Activated CD8-positive, alpha-beta T cell treated with anti-CD3 and anti-CD28 coated beads for 36 hours (primary cell): ENCODE measurements at regions of chr19 and their contacts with region 1.

Region 1: DNA sequence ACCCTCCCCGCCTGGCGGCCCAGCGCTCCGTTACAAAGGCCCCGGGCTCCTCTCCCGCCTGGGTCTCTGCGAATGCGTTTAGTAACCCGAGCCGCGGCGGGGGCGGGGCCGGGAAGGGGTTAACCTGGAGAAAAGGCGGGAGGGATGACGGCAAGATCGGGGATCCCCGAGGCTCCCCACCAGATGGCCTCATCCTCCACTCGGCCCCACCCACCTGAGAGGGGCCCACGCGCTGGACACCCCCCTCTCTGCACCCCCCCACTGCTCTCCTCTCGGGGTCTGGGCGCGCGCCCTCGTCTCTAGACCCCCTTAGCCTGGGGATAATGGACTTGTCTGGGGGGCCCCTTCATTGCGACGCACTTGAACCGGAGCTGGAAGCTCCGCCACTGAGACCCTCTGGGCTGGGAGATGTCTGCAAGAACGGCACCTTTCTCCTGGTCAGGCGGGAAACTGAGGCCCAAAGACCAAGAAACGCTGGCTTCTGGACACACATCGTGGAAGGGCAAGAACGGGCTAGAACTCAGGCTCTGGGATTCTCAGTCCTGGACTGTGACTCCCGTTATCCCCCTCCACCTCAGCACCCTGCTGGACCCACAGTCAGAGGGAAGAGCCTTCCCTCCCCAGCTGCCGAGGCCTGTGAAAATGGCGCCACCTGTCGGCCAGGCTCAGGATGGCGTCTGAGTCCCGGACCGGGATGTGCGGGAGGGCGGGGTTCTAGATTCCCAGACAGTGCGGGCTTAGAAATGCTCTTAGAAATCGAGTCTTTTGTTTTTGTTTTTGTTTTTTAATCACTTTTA is 2.9 kb upstream of the LTBP4 start:
- DNase-seq: peak; percentile 88
- ATAC-seq: peak; percentile 60
- H3K4me3 Mint-ChIP-seq: peak overlapping the region; percentile 38
- H3K27ac Mint-ChIP-seq: no peak overlapping the region
- H3K4me1 Mint-ChIP-seq: peaks cover 54% of the 10 kb centered on the region
- H3K27me3 Mint-ChIP-seq: peaks cover 43% of the 10 kb centered on the region
- CTCF ChIP-seq: peak; percentile 99

Region 2: DNA sequence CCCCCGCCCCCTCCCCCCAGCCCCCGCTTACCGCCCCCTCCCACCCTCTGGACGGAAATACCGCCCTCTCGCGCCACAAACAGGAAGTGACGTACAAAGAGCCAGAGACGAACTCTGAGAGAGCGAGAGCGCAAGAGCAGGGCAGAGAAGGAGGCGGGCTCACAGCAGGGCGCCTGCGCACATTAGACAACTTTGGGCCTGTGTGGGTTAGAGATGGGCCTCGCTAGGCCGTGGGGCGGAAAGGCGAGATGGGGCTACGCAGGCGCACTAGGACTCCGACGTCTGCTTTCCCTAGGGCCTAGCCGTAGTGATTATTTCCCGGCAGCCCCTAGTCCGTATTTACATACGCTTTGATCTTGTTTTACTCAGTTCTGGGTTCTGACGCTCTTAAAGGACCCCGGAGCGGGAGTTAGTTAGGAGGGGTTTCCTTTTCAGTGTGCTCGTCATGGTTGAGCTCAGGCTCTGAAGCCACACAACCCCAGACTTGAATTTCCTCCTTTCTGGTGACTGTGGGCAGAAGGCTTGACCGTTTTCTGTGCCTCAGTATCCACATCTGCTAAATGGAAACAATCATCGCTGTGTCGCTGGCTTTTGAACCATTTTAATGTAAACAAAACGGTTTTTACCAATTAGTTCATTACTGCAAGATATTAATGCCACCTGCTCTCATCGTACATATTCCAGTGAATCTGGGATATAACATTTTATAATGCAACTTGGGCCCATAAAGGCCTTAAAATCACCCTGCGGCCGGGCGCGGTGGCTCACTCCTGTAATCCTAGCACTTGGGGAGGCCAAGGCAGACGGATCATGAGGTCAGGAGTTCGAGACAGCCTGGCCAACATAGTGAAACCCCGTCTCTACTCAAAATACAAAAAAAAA is 312.7 kb before region 1 on chr19:
- CTCF ChIA-PET with region 1: no interaction called
- POLR2A ChIA-PET with region 1: interaction called, 4 read pairs
- intact Hi-C with region 1: loop called (anchors 10 kb)
- DNase-seq: peak; percentile 99
- ATAC-seq: peak; percentile 84
- H3K4me3 Mint-ChIP-seq: peak overlapping the region; percentile 98
- H3K27ac Mint-ChIP-seq: peak overlapping the region; percentile 99
- H3K4me1 Mint-ChIP-seq: peaks cover 43% of the 10 kb centered on the region
- H3K27me3 Mint-ChIP-seq: no peaks in the 10 kb centered on the region
- CTCF ChIP-seq: no peak

Region 3: GRCh38 chr19:40305403-40305802 is 292.9 kb before region 1 on chr19:
- CTCF ChIA-PET with region 1: interaction called, 10 read pairs
- POLR2A ChIA-PET with region 1: no interaction called
- intact Hi-C with region 1: no loop called
- DNase-seq: peak; percentile 82
- ATAC-seq: peak; percentile 68
- H3K4me3 Mint-ChIP-seq: no peak overlapping the region
- H3K27ac Mint-ChIP-seq: no peak overlapping the region
- H3K4me1 Mint-ChIP-seq: peaks cover 2% of the 10 kb centered on the region
- H3K27me3 Mint-ChIP-seq: no peaks in the 10 kb centered on the region
- CTCF ChIP-seq: peak; percentile 82

Region 4: GRCh38 chr19:40489882-40490230 is 108.5 kb before region 1 on chr19:
- CTCF ChIA-PET with region 1: no interaction called
- POLR2A ChIA-PET with region 1: no interaction called
- intact Hi-C with region 1: no loop called
- DNase-seq: no peak
- ATAC-seq: no peak
- H3K4me3 Mint-ChIP-seq: no peak overlapping the region
- H3K27ac Mint-ChIP-seq: no peak overlapping the region
- H3K4me1 Mint-ChIP-seq: peaks cover 6% of the 10 kb centered on the region
- H3K27me3 Mint-ChIP-seq: peaks cover 17% of the 10 kb centered on the region
- CTCF ChIP-seq: no peak

Region 5: GRCh38 chr19:40523322-40524047 is 74.8 kb before region 1 on chr19:
- CTCF ChIA-PET with region 1: interaction called, 10 read pairs
- POLR2A ChIA-PET with region 1: no interaction called
- intact Hi-C with region 1: loop called (anchors 5 kb)
- DNase-seq: peak; percentile 67
- ATAC-seq: peak; percentile 87
- H3K4me3 Mint-ChIP-seq: no peak overlapping the region
- H3K27ac Mint-ChIP-seq: no peak overlapping the region
- H3K4me1 Mint-ChIP-seq: no peaks in the 10 kb centered on the region
- H3K27me3 Mint-ChIP-seq: peaks cover 16% of the 10 kb centered on the region
- CTCF ChIP-seq: peak; percentile 74

Region 6: DNA sequence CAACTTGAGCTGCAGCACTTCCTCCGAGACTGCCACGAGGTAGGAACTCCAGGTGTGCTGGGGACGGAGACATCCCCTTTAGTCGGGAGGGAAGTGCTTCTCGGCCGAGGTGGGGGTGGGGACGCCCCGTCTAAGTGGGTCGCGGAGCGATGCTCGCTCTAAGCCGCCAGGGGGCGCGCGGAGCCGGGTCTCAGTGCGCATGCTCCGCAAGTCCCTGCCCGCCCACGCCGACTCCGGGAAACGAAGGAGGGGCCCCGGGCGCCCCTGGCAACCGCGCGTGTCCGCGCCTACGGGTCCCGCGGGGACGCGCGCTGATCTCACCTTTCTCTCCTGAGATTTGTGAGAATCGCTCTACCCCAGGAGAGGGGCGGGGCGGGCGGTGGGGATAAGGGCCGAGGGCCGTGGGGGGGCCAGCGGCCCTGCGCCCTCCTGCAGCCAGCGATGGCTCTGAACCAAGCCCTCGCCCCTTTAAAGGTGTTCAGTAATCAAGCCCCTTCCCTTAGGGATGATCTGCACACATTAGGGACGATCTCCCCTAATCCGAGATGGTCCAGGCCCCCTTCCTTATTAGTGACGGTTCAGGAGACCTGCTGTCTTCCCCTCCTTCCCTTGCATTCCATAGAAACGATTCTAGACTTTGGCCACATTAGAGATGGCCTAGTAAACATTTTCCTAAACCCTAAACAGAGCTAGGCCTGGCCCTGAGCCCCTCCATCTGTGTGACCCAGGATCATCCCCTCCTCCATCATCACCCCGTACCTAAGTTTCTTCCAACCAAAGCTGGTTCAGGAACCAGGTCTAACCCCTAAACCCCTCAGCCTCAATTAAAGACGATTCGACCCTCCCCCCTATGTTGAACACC is 69.0 kb before region 1 on chr19:
- CTCF ChIA-PET with region 1: interaction called, 10 read pairs
- POLR2A ChIA-PET with region 1: interaction called, 8 read pairs
- intact Hi-C with region 1: loop called (anchors 5 kb)
- DNase-seq: peak; percentile 91
- ATAC-seq: peak; percentile 90
- H3K4me3 Mint-ChIP-seq: peak overlapping the region; percentile 38
- H3K27ac Mint-ChIP-seq: no peak overlapping the region
- H3K4me1 Mint-ChIP-seq: peaks cover 12% of the 10 kb centered on the region
- H3K27me3 Mint-ChIP-seq: peaks cover 20% of the 10 kb centered on the region
- CTCF ChIP-seq: peak; percentile 99

Region 7: DNA sequence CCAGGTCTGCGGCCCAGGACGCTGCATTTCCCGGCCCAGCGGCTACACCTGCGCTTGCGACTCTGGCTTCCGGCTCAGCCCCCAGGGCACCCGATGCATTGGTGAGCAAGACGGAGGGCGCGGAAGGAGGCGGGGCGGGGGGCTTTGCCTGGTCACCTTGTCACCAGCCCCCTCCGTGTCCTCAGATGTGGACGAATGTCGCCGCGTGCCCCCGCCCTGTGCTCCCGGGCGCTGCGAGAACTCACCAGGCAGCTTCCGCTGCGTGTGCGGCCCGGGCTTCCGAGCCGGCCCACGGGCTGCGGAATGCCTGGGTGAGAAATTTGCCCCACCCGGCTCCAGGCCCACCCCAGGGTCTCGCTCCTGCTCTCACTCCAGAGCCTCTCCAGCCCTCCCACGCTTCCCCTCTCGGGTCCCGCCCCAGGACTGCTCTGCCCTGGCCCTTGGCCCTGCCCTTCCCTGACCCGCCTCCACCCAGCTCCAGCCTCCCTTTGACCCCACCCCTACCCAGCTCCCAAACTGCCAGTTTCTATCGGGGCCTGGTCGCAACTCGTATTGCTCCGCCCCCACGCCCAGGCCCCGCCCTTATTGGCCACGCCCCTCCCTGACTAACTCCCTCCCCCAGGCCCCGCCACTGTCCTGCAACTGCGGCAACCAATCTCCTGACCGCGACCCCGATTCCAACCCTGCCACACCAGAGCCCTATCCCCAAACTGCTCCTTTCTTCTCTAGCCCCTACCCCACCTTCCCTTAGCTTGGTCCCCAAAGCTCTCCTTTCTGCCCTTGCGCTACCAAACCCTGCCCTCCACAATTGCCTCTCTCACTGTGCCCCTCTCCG is 11.5 kb after region 1 on chr19:
- CTCF ChIA-PET with region 1: interaction called, 17 read pairs
- POLR2A ChIA-PET with region 1: interaction called, 31 read pairs
- intact Hi-C with region 1: no loop called
- DNase-seq: peak; percentile 96
- ATAC-seq: peak; percentile 58
- H3K4me3 Mint-ChIP-seq: peak overlapping the region; percentile 80
- H3K27ac Mint-ChIP-seq: peak overlapping the region; percentile 98
- H3K4me1 Mint-ChIP-seq: peaks cover 55% of the 10 kb centered on the region
- H3K27me3 Mint-ChIP-seq: no peaks in the 10 kb centered on the region
- CTCF ChIP-seq: no peak

Region 8: DNA sequence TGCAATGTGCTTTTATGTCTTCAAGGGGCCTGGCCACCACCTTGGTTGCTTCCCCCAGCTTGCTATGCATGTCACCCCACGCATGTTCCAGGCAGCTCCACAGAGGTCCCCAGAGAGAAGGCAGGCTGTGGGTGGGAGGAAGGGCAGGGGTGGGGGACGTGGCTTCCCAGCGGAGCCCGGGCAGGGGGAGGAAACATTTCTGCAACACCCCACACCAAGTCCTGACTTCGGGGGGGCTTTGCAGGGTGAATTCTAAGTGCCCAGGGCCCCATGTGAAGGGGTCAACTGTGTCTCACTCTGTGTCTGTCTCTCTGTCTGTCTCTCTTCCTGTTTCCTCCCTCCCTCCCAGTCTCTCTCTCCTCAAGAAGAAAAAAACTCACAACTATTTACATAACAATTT is 42.4 kb after region 1 on chr19:
- CTCF ChIA-PET with region 1: interaction called, 34 read pairs
- POLR2A ChIA-PET with region 1: no interaction called
- intact Hi-C with region 1: no loop called
- DNase-seq: no peak
- ATAC-seq: no peak
- H3K4me3 Mint-ChIP-seq: no peak overlapping the region
- H3K27ac Mint-ChIP-seq: no peak overlapping the region
- H3K4me1 Mint-ChIP-seq: peaks cover 2% of the 10 kb centered on the region
- H3K27me3 Mint-ChIP-seq: peaks cover 1% of the 10 kb centered on the region
- CTCF ChIP-seq: no peak